ENCODE measurements at regions of chr5 and their contacts with region 1.

Region 1: GRCh38 chr5:36325196-36325595 is 23.5 kb upstream of the RANBP3L start:
- DNase-seq: no peak
- ATAC-seq: no peak
- H3K4me3 ChIP-seq: no peak overlapping the region
- H3K27ac ChIP-seq: no peak overlapping the region
- H3K4me1 ChIP-seq: no peaks in the 10 kb centered on the region
- H3K27me3 ChIP-seq: no peaks in the 10 kb centered on the region
- CTCF ChIP-seq: no peak

Region 2: GRCh38 chr5:36507332-36507952 is 182.2 kb after region 1 on chr5:
- intact Hi-C with region 1: loop called (anchors 5 kb)
- DNase-seq: peak; percentile 80
- ATAC-seq: peak; percentile 58 to 83
- H3K4me3 ChIP-seq: no peak overlapping the region
- H3K27ac ChIP-seq: no peak overlapping the region
- H3K4me1 ChIP-seq: no peaks in the 10 kb centered on the region
- H3K27me3 ChIP-seq: no peaks in the 10 kb centered on the region
- CTCF ChIP-seq: peak; percentile 84

Measured in lower lobe of right lung (tissue), 2 donors.